ENCODE measurements at regions of chr3 and their contacts with region 1.

Region 1: GRCh38 chr3:62665598-62666437 is 209.4 kb downstream of the CADPS start:
- DNase-seq: peak in 1 of 2 experiments; percentile 47
- H3K4me3 ChIP-seq: no peak overlapping the region
- H3K27ac ChIP-seq: no peak overlapping the region
- H3K4me1 ChIP-seq: no peaks in the 10 kb centered on the region
- H3K27me3 ChIP-seq: 0 out of 2 replicates have a peak, but pooled peaks cover 3% of the 10 kb centered on the region
- CTCF ChIP-seq: peak; percentile 61

Region 2: DNA sequence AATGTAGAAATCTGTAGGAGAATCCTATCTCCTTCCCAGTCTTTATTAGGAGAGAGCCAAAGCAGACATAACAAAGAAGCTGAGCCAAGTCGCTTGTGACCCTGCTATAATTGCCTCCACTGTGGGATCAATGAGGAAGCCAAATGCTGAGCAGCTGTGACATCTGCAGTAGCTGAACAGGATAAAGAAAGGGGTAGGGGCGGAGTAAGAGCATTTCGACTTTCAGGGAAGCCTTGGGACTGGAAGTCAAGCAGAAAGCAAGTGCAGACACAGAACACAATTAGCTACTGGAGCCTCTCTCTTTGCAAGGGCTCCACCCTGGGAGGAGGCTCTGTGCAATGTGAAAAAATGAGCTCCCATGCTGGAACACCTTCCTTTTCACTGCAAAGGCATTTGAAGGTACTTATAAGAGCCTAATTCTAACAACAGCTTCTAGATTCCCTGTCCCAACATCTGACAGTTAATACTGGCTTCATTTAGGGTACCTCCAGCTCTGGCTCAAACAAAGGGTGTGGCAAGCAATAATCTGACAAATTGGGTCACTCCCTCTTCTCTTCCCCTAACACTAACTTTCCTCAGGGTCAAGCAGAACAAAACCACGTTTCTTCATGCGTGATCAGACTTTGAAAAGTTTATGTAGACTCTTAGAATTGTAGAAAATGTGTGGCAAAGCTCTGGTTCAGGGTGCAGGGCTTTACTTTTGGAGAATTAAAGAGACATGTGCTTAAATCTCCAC is 43.0 kb after region 1 on chr3:
- CTCF ChIA-PET with region 1: no interaction called
- POLR2A ChIA-PET with region 1: interaction called, 10 read pairs
- intact Hi-C with region 1: no loop called
- DNase-seq: no peak
- H3K4me3 ChIP-seq: no peak overlapping the region
- H3K27ac ChIP-seq: no peak overlapping the region
- H3K4me1 ChIP-seq: no peaks in the 10 kb centered on the region
- H3K27me3 ChIP-seq: no peaks in the 10 kb centered on the region
- CTCF ChIP-seq: no peak

Region 3: GRCh38 chr3:62723166-62723913 is 57.5 kb after region 1 on chr3:
- CTCF ChIA-PET with region 1: no interaction called
- POLR2A ChIA-PET with region 1: no interaction called
- intact Hi-C with region 1: no loop called
- DNase-seq: no peak
- H3K4me3 ChIP-seq: no peak overlapping the region
- H3K27ac ChIP-seq: no peak overlapping the region
- H3K4me1 ChIP-seq: no peaks in the 10 kb centered on the region
- H3K27me3 ChIP-seq: no peaks in the 10 kb centered on the region; the same call in 1 of the 2 replicates
- CTCF ChIP-seq: no peak

Region 4: DNA sequence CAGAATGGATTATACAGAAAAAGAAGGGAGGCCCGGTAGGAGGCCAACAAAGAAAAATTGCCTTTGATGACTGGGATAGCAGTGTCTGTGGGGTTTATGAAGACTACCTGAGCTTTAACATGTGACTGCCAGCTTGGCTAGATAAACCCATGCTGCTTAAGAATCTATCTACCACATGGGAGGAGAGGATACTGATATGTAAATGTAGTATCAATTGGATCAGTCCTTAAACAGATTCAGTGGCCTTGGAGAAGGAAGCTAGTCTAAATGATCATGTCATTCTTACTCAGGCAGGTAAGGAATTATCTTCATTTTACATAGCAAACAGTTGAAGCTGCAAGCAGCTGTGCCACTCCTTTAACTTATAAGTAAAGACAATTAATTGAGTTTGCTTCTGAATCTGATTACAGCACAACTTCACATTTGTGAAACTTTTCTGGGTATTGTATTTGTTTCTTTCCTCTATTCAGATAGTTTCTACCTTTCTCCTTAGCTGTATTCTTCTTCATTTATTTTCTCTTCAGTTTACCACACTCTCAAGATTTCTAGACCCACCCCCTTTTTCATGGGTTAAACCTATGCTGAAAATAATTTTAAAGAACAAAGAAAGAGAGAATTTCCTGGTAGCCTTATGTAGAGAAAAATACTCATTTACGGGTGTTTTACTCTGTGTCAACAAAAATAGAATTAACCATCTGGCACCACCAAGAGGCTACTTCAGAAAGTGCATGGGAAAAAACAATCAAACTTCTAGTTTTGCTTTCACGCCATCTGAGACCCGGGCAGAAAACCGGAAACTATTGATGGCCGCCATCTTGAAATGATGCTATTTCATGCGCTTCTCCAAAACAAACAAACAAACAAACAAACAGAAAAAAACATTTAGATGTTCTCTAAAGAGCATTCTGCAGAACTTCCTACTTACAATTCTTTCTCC is 562.5 kb after region 1 on chr3:
- CTCF ChIA-PET with region 1: no interaction called
- POLR2A ChIA-PET with region 1: no interaction called
- intact Hi-C with region 1: loop called (anchors 10 kb)
- DNase-seq: no peak
- H3K4me3 ChIP-seq: no peak overlapping the region
- H3K27ac ChIP-seq: no peak overlapping the region
- H3K4me1 ChIP-seq: no peaks in the 10 kb centered on the region
- H3K27me3 ChIP-seq: no peaks in the 10 kb centered on the region
- CTCF ChIP-seq: 0 out of 2 replicates have a peak, but pooled peaks have one; percentile 41

Region 5: GRCh38 chr3:63818281-63819150 is 1152.7 kb after region 1 on chr3:
- CTCF ChIA-PET with region 1: no interaction called
- POLR2A ChIA-PET with region 1: no interaction called
- intact Hi-C with region 1: loop called (anchors 10 kb)
- DNase-seq: peak in 1 of 2 experiments; percentile 40
- H3K4me3 ChIP-seq: no peak overlapping the region
- H3K27ac ChIP-seq: no peak overlapping the region
- H3K4me1 ChIP-seq: no peaks in the 10 kb centered on the region
- H3K27me3 ChIP-seq: no peaks in the 10 kb centered on the region
- CTCF ChIP-seq: peak; percentile 81

Measured in PC-9 (cell line).